ENCODE measurements at regions of chr1 and their contacts with region 1.

Region 1: GRCh38 chr1:53393325-53393792 is 65.5 kb upstream of the LRP8 start:
- DNase-seq: peak; percentile 87
- ATAC-seq: peak; percentile 90
- H3K4me3 ChIP-seq: no peak overlapping the region
- H3K27ac ChIP-seq: no peak overlapping the region
- H3K4me1 ChIP-seq: no peaks in the 10 kb centered on the region
- H3K27me3 ChIP-seq: no peaks in the 10 kb centered on the region
- CTCF ChIP-seq: peak; percentile 95

Region 2: DNA sequence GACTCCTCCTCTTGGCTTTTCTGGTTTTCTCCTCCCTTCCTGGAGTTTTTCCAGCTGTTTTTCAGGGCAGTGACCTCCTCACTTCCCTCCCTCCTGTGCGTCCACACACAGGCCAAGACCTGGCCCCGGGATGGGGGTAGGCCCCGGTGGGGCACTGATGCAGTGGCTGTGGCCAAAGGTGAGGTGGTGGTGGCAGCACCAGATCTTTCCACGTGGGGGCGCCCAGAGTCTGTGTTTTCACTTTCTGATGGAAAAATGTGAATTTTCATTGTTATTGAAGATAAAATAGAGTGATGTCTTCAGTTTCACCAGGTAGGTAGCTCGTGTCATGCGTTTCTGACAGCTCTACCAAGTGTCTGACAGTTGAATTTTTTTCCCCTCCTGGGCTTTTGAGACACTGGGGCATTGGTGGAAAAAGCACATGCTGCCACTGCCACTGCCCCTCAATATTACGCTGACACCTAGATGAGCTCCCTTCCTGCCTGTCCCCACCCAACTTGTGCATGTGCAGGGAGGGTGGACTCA is 115.1 kb before region 1 on chr1:
- intact Hi-C with region 1: loop called (anchors 5 kb)
- DNase-seq: peak; percentile 76
- ATAC-seq: peak; percentile 70
- H3K4me3 ChIP-seq: no peak overlapping the region
- H3K27ac ChIP-seq: no peak overlapping the region
- H3K4me1 ChIP-seq: no peaks in the 10 kb centered on the region
- H3K27me3 ChIP-seq: no peaks in the 10 kb centered on the region
- CTCF ChIP-seq: peak; percentile 92

Region 3: GRCh38 chr1:53296117-53296749 is 97.1 kb before region 1 on chr1:
- intact Hi-C with region 1: no loop called
- DNase-seq: peak; percentile 72
- ATAC-seq: peak; percentile 4
- H3K4me3 ChIP-seq: no peak overlapping the region
- H3K27ac ChIP-seq: peak overlapping the region; percentile 3
- H3K4me1 ChIP-seq: peaks cover 13% of the 10 kb centered on the region
- H3K27me3 ChIP-seq: no peaks in the 10 kb centered on the region
- CTCF ChIP-seq: no peak

Region 4: DNA sequence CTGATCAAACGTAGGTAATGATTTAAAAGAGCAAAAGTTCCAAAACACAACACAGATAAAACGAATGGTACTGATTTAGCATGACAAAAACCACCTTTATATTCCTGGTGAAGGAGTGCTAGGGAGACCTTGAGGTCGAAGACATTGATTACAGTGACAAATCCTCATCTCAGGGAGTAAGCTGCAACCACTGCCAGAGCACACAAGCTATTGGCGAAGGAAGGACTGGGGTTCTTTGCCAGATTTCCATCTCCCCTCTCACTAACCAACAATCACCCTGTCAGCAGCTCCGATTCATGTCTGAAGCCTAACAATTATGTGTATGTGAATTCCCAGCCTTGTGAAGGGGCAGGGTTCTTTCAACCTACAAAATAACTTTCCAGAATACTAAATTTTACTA is 25.7 kb after region 1 on chr1:
- intact Hi-C with region 1: no loop called
- DNase-seq: no peak
- ATAC-seq: no peak
- H3K4me3 ChIP-seq: no peak overlapping the region
- H3K27ac ChIP-seq: no peak overlapping the region
- H3K4me1 ChIP-seq: no peaks in the 10 kb centered on the region
- H3K27me3 ChIP-seq: peaks cover 5% of the 10 kb centered on the region
- CTCF ChIP-seq: no peak

Region 5: GRCh38 chr1:53550201-53550741 is 156.9 kb after region 1 on chr1:
- intact Hi-C with region 1: no loop called
- DNase-seq: peak; percentile 52
- ATAC-seq: peak; percentile 35
- H3K4me3 ChIP-seq: no peak overlapping the region
- H3K27ac ChIP-seq: no peak overlapping the region
- H3K4me1 ChIP-seq: peaks cover 8% of the 10 kb centered on the region
- H3K27me3 ChIP-seq: no peaks in the 10 kb centered on the region
- CTCF ChIP-seq: no peak